Caco-2 (cell line): ENCODE measurements at regions of chr3 and their contacts with region 1.

Region 1: DNA sequence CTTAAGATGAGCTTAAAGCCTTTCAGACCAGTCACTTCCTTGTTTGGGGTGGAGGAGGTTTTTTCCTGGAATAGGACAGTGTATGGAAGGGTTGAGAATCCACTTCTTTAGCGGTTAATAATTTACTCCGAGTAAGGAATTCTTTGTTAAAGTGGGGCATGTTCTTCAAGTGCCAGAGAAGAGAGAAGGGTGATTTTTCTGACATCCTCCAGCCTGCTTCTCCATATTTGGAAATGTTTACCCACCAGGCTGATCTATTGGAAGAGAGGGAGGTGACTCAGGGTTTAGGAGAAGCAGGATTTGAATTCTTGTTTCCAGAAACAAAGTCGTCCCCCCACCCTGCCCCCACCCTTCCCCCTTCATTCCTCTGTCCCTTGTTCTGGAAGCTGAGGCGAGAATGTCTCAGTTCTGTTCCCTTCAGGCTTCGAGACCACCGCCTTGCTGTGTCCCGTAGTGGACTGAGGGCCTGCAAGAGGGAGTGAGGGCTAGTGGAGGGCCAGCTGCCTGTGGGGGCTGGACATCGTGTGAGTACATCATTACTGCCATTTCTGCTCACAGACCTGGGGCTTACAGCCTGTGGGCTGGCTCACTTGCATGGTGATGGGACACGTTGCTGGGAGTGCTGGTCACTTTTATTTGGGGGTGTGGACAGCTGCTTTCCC is 58.5 kb downstream of the LPP start:
- DNase-seq: peak; percentile 55 to 60
- H3K4me3 ChIP-seq: no peak overlapping the region
- H3K4me3 Mint-ChIP-seq: peak overlapping the region; percentile 44
- H3K27ac Mint-ChIP-seq: peak overlapping the region; percentile 79
- H3K4me1 ChIP-seq: peaks cover 60% of the 10 kb centered on the region
- H3K4me1 Mint-ChIP-seq: peaks cover 35% of the 10 kb centered on the region
- H3K27me3 ChIP-seq: no peaks in the 10 kb centered on the region
- H3K27me3 Mint-ChIP-seq: no peaks in the 10 kb centered on the region
- CTCF ChIP-seq: no peak

Region 2: DNA sequence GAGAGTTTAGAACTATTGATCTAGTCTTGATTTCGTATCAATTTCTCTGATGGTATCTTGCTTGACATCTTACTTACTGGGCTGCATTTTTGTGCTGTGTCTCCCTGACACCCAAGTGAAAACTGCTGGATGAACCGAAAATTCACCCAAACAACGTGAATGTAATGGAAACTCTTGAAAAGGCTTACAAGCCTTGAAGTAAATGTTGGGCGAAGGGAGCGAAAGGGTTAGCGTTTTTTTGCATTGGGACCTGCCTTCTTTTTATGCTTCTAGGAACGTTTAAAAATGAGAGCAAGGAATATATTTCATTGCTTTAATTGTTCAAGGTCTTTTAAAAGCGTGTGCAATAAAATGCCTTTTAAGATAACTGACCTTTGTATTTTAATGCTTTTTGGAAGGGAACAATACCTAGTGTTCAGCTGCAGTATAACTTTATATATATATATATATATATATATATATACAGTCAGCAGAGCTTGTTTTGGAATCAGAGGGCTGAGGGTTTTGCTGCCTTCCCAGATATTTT is 35.7 kb after region 1 on chr3:
- CTCF ChIA-PET with region 1: no interaction called
- POLR2A ChIA-PET with region 1: no interaction called
- intact Hi-C with region 1: no loop called
- DNase-seq: no peak
- H3K4me3 ChIP-seq: no peak overlapping the region
- H3K4me3 Mint-ChIP-seq: no peak overlapping the region
- H3K27ac Mint-ChIP-seq: no peak overlapping the region
- H3K4me1 ChIP-seq: peaks cover 11% of the 10 kb centered on the region
- H3K4me1 Mint-ChIP-seq: peaks cover 12% of the 10 kb centered on the region
- H3K27me3 ChIP-seq: no peaks in the 10 kb centered on the region
- H3K27me3 Mint-ChIP-seq: no peaks in the 10 kb centered on the region
- CTCF ChIP-seq: no peak

Region 3: DNA sequence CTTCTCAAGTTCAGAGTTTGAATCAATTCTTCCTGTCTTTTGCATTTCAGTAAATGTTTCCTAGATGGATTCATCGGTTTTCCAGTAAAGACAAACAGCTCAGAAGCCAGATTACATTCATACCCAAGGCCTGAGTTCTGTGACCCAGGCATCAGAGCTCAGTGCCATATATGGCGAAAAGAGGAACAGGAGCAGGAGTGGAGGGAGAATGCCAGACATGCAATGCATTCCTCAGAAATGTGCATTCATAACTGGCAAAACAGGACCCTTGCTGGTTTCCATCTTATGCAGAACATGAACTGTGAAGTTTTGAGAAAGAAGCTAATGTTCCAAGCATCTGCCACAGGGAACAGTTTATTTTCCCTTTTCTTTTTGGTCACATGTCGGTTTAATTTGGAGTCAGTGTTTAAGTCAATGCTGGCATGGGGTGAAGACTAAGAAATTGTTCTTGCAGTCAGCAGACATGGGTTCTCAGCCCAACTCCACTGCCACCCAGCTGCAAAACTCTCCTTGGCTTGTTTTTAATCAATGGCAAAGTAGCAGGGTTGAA is 58.1 kb after region 1 on chr3:
- CTCF ChIA-PET with region 1: no interaction called
- POLR2A ChIA-PET with region 1: no interaction called
- intact Hi-C with region 1: loop called (anchors 2 kb)
- DNase-seq: peak; percentile 71 to 78
- H3K4me3 ChIP-seq: no peak overlapping the region
- H3K4me3 Mint-ChIP-seq: peak overlapping the region; percentile 47
- H3K27ac Mint-ChIP-seq: peak overlapping the region; percentile 77
- H3K4me1 ChIP-seq: peaks cover 75% of the 10 kb centered on the region
- H3K4me1 Mint-ChIP-seq: peaks cover 40% of the 10 kb centered on the region
- H3K27me3 ChIP-seq: no peaks in the 10 kb centered on the region
- H3K27me3 Mint-ChIP-seq: no peaks in the 10 kb centered on the region
- CTCF ChIP-seq: no peak

Region 4: GRCh38 chr3:188286087-188286513 is 73.7 kb after region 1 on chr3:
- CTCF ChIA-PET with region 1: no interaction called
- POLR2A ChIA-PET with region 1: no interaction called
- intact Hi-C with region 1: loop called (anchors 5 kb)
- DNase-seq: no peak
- H3K4me3 ChIP-seq: no peak overlapping the region
- H3K4me3 Mint-ChIP-seq: no peak overlapping the region
- H3K27ac Mint-ChIP-seq: no peak overlapping the region
- H3K4me1 ChIP-seq: peaks cover 38% of the 10 kb centered on the region
- H3K4me1 Mint-ChIP-seq: peaks cover 45% of the 10 kb centered on the region
- H3K27me3 ChIP-seq: no peaks in the 10 kb centered on the region
- H3K27me3 Mint-ChIP-seq: no peaks in the 10 kb centered on the region
- CTCF ChIP-seq: no peak

Region 5: GRCh38 chr3:188309437-188310269 is 97.2 kb after region 1 on chr3:
- CTCF ChIA-PET with region 1: no interaction called
- POLR2A ChIA-PET with region 1: no interaction called
- intact Hi-C with region 1: no loop called
- DNase-seq: no peak
- H3K4me3 ChIP-seq: no peak overlapping the region
- H3K4me3 Mint-ChIP-seq: no peak overlapping the region
- H3K27ac Mint-ChIP-seq: peak overlapping the region; percentile 53
- H3K4me1 ChIP-seq: peaks cover 4% of the 10 kb centered on the region; the same call in 1 of the 2 replicates
- H3K4me1 Mint-ChIP-seq: peaks cover 13% of the 10 kb centered on the region
- H3K27me3 ChIP-seq: no peaks in the 10 kb centered on the region
- H3K27me3 Mint-ChIP-seq: no peaks in the 10 kb centered on the region
- CTCF ChIP-seq: no peak

Region 6: GRCh38 chr3:188469228-188469885 is 256.9 kb after region 1 on chr3:
- CTCF ChIA-PET with region 1: no interaction called
- POLR2A ChIA-PET with region 1: no interaction called
- intact Hi-C with region 1: no loop called
- DNase-seq: no peak
- H3K4me3 ChIP-seq: no peak overlapping the region
- H3K4me3 Mint-ChIP-seq: no peak overlapping the region
- H3K27ac Mint-ChIP-seq: no peak overlapping the region
- H3K4me1 ChIP-seq: peaks cover 3% of the 10 kb centered on the region; the same call in 1 of the 2 replicates
- H3K4me1 Mint-ChIP-seq: peaks cover 14% of the 10 kb centered on the region
- H3K27me3 ChIP-seq: no peaks in the 10 kb centered on the region
- H3K27me3 Mint-ChIP-seq: no peaks in the 10 kb centered on the region
- CTCF ChIP-seq: no peak